ENCODE measurements at regions of chr1 and their contacts with region 1.

Region 1: DNA sequence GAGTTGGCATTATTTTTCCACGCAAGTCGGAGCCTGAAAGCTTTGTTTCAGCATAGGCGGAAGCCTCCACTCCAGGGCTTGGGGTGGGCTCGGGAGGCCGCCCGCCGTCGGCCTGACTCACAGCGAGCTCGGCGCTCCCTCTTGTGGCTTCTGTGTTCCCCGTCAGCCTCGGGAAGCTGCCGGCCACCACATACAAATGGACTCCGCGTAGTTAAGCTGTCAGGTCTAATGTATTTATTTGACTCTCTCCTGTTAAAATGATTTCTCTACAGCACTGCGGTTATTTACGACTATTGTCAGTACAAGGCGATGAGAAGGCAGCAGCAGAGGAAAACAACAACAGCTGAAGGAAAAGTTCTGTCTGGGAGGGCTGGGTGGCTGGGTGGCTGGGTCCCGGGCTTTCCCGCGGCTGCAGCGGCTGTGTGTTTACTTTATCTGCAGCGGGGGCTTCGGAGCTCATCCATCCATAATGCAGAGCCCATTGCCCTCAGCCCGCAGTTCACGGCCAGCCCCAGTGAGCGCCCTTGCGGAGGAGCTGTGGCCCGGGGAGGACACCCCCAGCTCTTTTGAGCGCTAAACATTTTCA is 375.7 kb upstream of the CAMK1G start:
- DNase-seq: no peak
- H3K4me3 ChIP-seq: peak overlapping the region; percentile 26 to 36
- H3K27ac ChIP-seq: no peak overlapping the region
- H3K4me1 ChIP-seq: peaks cover 18% of the 10 kb centered on the region
- H3K27me3 ChIP-seq: no peaks in the 10 kb centered on the region
- CTCF ChIP-seq: peak in 2 of 3 experiments; percentile 37 to 59
- POLR2A ChIP-seq: no peak

Region 2: DNA sequence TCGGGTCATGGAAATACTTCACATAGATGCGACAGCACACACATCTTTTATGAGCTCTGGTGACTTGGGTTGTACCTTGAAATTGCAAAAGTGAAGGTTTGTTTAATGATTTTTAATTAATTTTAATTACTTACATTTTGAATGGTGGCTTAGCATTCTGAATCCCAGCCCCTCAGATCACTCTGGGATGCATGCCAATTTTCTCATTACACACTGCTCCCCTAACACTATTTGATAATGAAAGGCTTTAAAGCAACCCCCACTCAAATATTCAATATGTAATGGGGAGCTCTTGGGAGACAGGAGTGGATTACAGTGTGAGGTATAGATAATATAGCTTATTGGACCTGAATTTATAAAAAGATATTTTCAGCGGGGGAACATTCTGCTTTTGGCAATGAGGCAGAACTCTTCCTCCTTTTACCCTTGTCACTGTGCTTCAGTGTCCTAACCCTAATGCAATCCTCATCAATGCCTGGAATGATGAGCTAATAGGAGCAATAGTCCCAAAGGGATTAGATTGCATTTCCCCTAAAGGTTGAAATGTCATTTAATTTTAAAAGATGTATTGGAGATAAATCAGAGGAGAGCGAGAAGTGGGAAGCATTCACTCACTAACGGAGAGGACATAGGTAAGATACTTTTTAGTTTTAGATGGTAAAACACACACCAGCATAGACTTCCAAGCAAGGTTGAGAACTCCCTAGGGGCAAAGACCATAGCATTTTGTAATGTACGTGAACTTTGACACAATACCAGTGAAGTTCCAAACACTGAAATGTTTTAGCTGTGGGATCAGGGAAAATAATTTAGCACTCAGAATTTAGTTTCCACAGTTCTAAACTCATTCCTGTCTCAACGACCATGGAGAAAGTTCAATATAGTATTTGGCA is 579.5 kb before region 1 on chr1:
- intact Hi-C with region 1: no loop called
- DNase-seq: no peak
- H3K4me3 ChIP-seq: no peak overlapping the region
- H3K27ac ChIP-seq: no peak overlapping the region
- H3K4me1 ChIP-seq: no peaks in the 10 kb centered on the region
- H3K27me3 ChIP-seq: no peaks in the 10 kb centered on the region
- CTCF ChIP-seq: no peak
- POLR2A ChIP-seq: no peak

Region 3: GRCh38 chr1:208652296-208653160 is 555.3 kb before region 1 on chr1:
- intact Hi-C with region 1: loop called (anchors 5 kb)
- DNase-seq: no peak
- H3K4me3 ChIP-seq: no peak overlapping the region
- H3K27ac ChIP-seq: no peak overlapping the region
- H3K4me1 ChIP-seq: no peaks in the 10 kb centered on the region
- H3K27me3 ChIP-seq: no peaks in the 10 kb centered on the region
- CTCF ChIP-seq: peak; percentile 32 to 70 (median 62)
- POLR2A ChIP-seq: no peak